Heart left ventricle (tissue), 16 donors: ENCODE measurements at regions of chr3 and their contacts with region 1.

Region 1: GRCh38 chr3:171646357-171647133 is 163.7 kb downstream of the PLD1 start:
- DNase-seq: peak in 4 of 5 donors; percentile 34 to 56 (median 48)
- ATAC-seq: peak; percentile 62 to 91 (median 86)
- H3K4me3 ChIP-seq: no peak overlapping the region
- H3K27ac ChIP-seq: peak overlapping the region in 11 of 12 donors; percentile 10 to 84 (median 57)
- H3K4me1 ChIP-seq: peaks cover 0 to 57% (median 22%) of the 10 kb centered on the region in 12 donors
- H3K27me3 ChIP-seq: no peaks in the 10 kb centered on the region
- CTCF ChIP-seq: peak; percentile 50 to 74 (median 60)
- POLR2A ChIP-seq: no peak

Region 2: DNA sequence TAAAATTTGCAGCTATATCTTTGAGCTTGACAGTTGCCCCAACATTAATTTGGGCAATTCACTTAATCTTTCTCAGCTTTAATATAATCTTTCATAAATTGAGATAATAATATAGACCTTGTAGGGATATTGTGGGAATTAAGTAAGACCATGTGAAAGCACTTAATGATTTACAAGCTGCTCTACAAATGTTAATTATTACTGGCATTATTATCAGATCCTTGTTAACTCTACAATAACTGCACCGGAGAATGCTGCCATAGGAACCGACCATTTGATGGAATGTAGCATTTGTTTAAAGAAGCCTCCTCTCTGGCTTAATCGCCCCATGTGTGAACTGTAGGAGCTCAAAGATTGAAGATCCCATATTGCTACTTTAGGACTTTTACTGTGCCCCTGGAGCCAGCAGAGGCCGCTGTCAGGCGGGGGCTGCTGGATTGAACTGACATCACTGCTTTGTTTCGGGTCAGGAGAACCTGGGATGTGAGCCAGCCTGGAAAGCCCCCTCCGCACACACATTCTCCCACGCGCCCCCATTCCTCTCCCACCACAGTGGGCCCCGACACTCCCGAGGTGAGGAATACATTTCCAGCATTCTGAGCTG is 32.1 kb before region 1 on chr3:
- intact Hi-C with region 1: no loop called
- DNase-seq: peak; percentile 19 to 61 (median 30)
- ATAC-seq: peak; percentile 27 to 75 (median 60)
- H3K4me3 ChIP-seq: no peak overlapping the region
- H3K27ac ChIP-seq: no peak overlapping the region
- H3K4me1 ChIP-seq: peaks cover 0 to 5% (median 0%) of the 10 kb centered on the region in 12 donors
- H3K27me3 ChIP-seq: no peaks in the 10 kb centered on the region
- CTCF ChIP-seq: peak; percentile 22 to 70 (median 54)
- POLR2A ChIP-seq: no peak

Region 3: DNA sequence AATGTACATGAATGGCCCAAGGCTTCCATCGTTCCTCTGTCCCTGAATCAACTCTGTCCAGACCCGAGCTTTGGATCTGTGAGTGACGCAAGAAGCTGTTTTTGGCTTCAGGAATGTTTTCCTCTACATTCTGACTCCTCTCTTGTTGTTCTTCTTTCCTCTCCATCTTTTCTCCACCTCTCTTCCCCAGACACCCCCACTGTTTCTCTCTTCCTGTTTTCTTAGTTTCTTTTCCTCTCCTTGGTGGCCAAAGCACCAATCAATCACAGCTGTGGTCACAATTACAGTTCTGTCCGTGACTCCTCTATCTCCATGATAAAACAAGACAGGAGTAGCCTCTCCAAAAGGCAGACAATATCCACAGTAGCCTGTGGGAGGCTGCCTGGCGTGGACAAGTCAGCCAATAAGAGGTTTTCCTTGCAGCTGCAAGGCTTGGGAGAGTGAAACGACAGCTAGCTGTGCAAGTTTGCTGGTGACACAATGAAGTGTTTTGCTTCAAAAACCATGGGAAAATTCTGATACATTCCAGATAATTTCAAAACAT is 191.7 kb after region 1 on chr3:
- intact Hi-C with region 1: loop called in 5 of 10 experiments (anchors 2 to 10 kb)
- DNase-seq: peak; percentile 56 to 76 (median 67)
- ATAC-seq: peak; percentile 65 to 81 (median 80)
- H3K4me3 ChIP-seq: peak overlapping the region in 9 of 12 donors; percentile 13 to 43 (median 21)
- H3K27ac ChIP-seq: peak overlapping the region; percentile 45 to 86 (median 70)
- H3K4me1 ChIP-seq: peaks cover 0 to 79% (median 50%) of the 10 kb centered on the region in 12 donors
- H3K27me3 ChIP-seq: no peaks in the 10 kb centered on the region
- CTCF ChIP-seq: peak in 3 of 12 donors; percentile 7 to 28 (median 11)
- POLR2A ChIP-seq: peak in 1 of 2 donors; percentile 11

Region 4: DNA sequence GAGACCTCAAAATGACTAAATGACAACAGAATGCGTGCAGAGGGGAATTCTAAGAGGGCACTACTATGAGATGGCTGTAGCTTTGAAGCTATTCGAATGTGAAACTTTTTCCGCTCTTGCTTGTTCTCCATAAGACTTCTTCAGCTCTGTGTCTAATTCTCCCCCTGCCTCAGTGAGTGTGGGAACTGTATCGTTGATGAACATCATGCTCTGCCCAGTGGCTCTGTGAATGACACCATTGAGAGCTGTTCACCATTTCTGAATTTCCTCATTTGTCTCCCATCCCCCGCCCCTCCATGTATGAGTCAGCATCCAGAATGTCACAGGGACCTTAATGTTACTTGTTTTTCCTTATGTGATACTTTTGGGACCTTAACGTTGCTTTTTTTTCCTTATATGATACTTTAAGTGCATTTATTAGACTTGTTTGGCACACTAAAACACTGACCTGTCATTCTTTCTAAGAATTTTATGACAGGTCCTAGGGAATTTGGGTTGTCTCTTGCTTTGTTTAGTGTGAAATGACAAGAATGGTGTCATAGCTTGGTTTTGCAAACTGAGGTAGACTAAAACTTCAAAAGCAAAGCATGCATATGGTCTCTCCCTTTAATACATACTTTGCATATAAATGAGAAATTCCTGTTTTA is 492.4 kb after region 1 on chr3:
- intact Hi-C with region 1: loop called in 1 of 10 experiments (anchors 10 kb)
- DNase-seq: peak in 4 of 5 donors; percentile 56 to 63 (median 56)
- ATAC-seq: peak; percentile 28 to 75 (median 58)
- H3K4me3 ChIP-seq: no peak overlapping the region
- H3K27ac ChIP-seq: peak overlapping the region in 11 of 12 donors; percentile 16 to 92 (median 68)
- H3K4me1 ChIP-seq: peaks cover 27 to 100% (median 77%) of the 10 kb centered on the region in 12 donors
- H3K27me3 ChIP-seq: no peaks in the 10 kb centered on the region
- CTCF ChIP-seq: no peak
- POLR2A ChIP-seq: no peak

Region 5: DNA sequence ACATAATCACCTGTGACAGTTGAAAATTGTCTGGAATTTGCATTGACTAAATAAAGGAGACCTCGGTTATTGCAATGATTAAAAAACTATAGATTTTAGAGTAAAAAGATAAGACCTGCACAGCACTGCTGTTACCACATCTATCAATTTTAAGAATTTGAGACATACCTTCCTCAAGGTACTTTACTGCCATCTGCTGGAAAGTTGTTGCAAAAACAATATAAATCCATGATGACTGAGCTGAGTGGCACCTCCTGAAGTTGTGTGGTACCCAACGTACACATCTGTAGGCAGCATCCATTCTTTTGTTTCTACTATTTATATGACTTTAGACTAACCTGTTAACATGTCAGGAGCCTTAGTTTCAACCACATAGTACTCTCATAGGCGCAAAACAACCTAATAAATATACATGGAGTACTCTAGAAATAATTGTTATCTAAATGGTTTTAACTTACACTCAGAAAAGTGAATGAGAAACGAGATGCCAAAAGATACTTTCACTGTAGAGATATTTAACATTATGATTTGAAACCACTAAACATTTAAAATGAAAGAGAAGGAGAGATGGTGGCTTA is 695.0 kb after region 1 on chr3:
- intact Hi-C with region 1: loop called in 7 of 10 experiments (anchors 5 to 10 kb)
- DNase-seq: no peak
- ATAC-seq: peak; percentile 35 to 70 (median 58)
- H3K4me3 ChIP-seq: no peak overlapping the region
- H3K27ac ChIP-seq: no peak overlapping the region
- H3K4me1 ChIP-seq: peaks cover 0 to 7% (median 0%) of the 10 kb centered on the region in 12 donors
- H3K27me3 ChIP-seq: no peaks in the 10 kb centered on the region
- CTCF ChIP-seq: peak; percentile 59 to 84 (median 72)
- POLR2A ChIP-seq: no peak